ENCODE measurements at regions of chr19 and their contacts with region 1.

Region 1: DNA sequence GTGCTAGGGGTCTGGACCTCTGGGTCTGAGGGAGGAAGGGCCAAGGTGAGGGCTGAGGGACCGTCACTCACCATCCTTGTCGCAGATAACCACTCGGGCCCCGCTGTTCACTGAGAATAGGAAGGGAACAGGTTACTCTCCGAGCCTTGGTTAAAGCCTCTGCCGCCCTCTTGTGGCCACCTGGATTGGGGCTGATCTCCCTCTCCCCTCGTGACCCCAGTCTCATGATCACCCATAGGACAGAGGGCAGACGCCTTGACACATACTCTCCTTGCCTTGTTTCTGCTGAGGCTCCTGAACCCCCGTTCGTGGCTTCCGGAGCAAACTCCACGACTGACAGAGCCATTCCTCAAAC is 580 bp downstream of the HSD17B14 start:
- DNase-seq: peak; percentile 87
- H3K4me3 Mint-ChIP-seq: peak overlapping the region; percentile 84
- H3K27ac Mint-ChIP-seq: peak overlapping the region; percentile 87
- H3K4me1 Mint-ChIP-seq: peaks cover 23% of the 10 kb centered on the region
- H3K27me3 Mint-ChIP-seq: peaks cover 7% of the 10 kb centered on the region

Region 2: GRCh38 chr19:48812094-48812929 is 23.4 kb before region 1 on chr19:
- intact Hi-C with region 1: loop called (anchors 1 kb)
- DNase-seq: peak; percentile 58
- H3K4me3 Mint-ChIP-seq: peak overlapping the region; percentile 76
- H3K27ac Mint-ChIP-seq: no peak overlapping the region
- H3K4me1 Mint-ChIP-seq: peaks cover 33% of the 10 kb centered on the region
- H3K27me3 Mint-ChIP-seq: peaks cover 2% of the 10 kb centered on the region

Region 3: GRCh38 chr19:48970923-48971395 is 135.2 kb after region 1 on chr19:
- intact Hi-C with region 1: loop called (anchors 2 kb)
- DNase-seq: peak; percentile 72
- H3K4me3 Mint-ChIP-seq: no peak overlapping the region
- H3K27ac Mint-ChIP-seq: peak overlapping the region; percentile 41
- H3K4me1 Mint-ChIP-seq: peaks cover 25% of the 10 kb centered on the region
- H3K27me3 Mint-ChIP-seq: no peaks in the 10 kb centered on the region